ENCODE measurements at regions of chr9 and their contacts with region 1.

Region 1: GRCh38 chr9:78121488-78121887 is 89.9 kb upstream of the GNAQ start:
- DNase-seq: peak; percentile 20 to 81 (median 50)
- ATAC-seq: no peak
- H3K4me3 ChIP-seq: no peak overlapping the region
- H3K4me3 Mint-ChIP-seq: no peak overlapping the region
- H3K27ac ChIP-seq: no peak overlapping the region
- H3K27ac Mint-ChIP-seq: peak overlapping the region; percentile 85
- H3K4me1 ChIP-seq: peaks cover 19% of the 10 kb centered on the region
- H3K4me1 Mint-ChIP-seq: peaks cover 62% of the 10 kb centered on the region
- H3K27me3 ChIP-seq: no peaks in the 10 kb centered on the region
- H3K27me3 Mint-ChIP-seq: no peaks in the 10 kb centered on the region
- CTCF ChIP-seq: peak; percentile 80

Region 2: DNA sequence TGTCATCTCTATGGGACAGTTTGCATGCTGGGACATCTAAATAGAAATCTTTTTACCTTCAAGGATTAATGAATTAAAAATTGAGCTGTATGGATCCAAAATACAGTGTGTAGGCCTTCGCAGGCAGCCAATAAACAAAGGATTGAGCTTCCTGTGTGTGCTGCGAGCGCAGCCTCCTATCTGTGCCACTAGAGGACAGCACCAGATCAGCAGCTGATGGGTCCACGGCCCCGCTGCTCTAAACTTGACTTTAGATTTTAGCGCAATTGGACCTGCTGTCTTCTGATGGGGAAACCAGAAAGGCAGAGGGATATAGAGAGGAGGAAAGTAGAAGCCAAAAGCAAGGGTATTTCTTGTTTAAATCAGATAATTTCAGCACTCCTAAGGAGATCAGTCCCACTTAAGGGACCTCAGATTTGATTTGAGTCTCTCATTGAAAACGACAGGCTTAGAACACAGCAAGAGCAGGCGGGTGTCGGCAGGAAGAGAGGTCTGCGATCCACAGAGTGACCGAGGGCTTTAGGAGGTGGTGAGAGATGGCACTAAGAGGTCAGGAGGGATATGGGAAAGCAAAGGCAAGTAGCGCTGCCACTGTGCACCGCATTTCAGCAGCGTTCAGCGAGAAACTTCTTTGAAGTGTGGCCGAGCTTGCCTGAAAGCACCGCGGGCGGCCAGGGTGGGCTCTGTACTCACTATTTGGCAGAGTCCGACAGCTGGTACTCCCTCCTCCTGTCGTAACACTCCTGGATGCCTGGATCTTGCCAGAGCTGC is 687.6 kb before region 1 on chr9:
- CTCF ChIA-PET with region 1: no interaction called
- POLR2A ChIA-PET with region 1: no interaction called
- intact Hi-C with region 1: loop called (anchors 5 kb)
- DNase-seq: peak; percentile 14 to 71 (median 38)
- ATAC-seq: peak; percentile 91
- H3K4me3 ChIP-seq: no peak overlapping the region
- H3K4me3 Mint-ChIP-seq: no peak overlapping the region
- H3K27ac ChIP-seq: no peak overlapping the region
- H3K27ac Mint-ChIP-seq: no peak overlapping the region
- H3K4me1 ChIP-seq: peaks cover 5% of the 10 kb centered on the region
- H3K4me1 Mint-ChIP-seq: peaks cover 5% of the 10 kb centered on the region
- H3K27me3 ChIP-seq: no peaks in the 10 kb centered on the region
- H3K27me3 Mint-ChIP-seq: peaks cover 5% of the 10 kb centered on the region
- CTCF ChIP-seq: peak; percentile 92

Region 3: GRCh38 chr9:77841739-77842386 is 279.6 kb before region 1 on chr9:
- CTCF ChIA-PET with region 1: no interaction called
- POLR2A ChIA-PET with region 1: no interaction called
- intact Hi-C with region 1: loop called (anchors 2 to 10 kb)
- DNase-seq: peak in 2 of 14 experiments; percentile 8 to 33
- ATAC-seq: no peak
- H3K4me3 ChIP-seq: no peak overlapping the region
- H3K4me3 Mint-ChIP-seq: no peak overlapping the region
- H3K27ac ChIP-seq: no peak overlapping the region
- H3K27ac Mint-ChIP-seq: peak overlapping the region; percentile 11
- H3K4me1 ChIP-seq: no peaks in the 10 kb centered on the region
- H3K4me1 Mint-ChIP-seq: peaks cover 21% of the 10 kb centered on the region
- H3K27me3 ChIP-seq: no peaks in the 10 kb centered on the region
- H3K27me3 Mint-ChIP-seq: no peaks in the 10 kb centered on the region
- CTCF ChIP-seq: peak; percentile 36

Region 4: DNA sequence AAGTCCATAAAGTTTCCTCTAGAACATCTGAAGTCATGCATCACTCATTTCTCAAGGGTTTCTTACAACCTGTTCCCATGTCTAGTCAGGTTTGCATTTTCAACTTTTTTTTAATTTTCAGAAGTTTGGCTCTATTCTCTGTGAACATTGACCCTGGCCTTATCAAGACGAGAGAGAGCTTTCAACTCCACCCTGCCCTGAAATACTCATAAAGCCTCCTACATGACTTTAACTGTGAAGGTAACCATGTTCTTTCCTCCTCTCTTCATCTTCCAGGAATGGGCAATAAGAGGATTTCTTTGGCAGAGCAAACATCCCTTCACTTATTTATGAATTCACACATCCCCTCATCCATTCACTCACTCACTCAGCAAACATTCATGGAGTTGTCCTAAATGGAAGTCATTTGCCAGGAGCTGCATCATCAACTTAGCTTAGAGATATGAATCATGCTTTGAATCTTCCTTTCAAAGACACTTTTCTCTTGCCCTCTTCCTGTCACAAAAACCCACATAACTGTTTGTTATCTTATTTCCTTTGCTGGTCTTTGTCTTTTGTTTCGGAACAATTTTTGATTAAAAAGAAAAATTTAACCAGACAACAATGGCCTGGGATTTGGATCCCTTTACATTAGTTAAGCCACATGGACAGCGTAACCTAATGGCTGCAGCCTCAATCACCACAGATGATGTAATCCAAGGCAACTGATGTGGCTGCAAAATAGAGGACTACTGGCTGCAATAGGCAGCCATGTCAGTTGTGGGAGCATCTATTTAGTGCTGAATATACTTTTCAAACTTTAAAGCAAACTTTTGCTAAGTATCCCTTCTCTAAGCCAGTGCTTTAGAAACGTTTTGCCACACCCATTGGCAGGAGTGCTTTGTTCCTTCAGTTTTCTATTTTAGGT is 46.9 kb before region 1 on chr9:
- CTCF ChIA-PET with region 1: no interaction called
- POLR2A ChIA-PET with region 1: interaction called, 10 read pairs
- intact Hi-C with region 1: no loop called
- DNase-seq: peak in 4 of 14 experiments; percentile 22 to 68 (median 60)
- ATAC-seq: peak; percentile 78
- H3K4me3 ChIP-seq: peak overlapping the region; percentile 18
- H3K4me3 Mint-ChIP-seq: peak overlapping the region; percentile 74
- H3K27ac ChIP-seq: peak overlapping the region; percentile 47 to 75
- H3K27ac Mint-ChIP-seq: peak overlapping the region; percentile 73
- H3K4me1 ChIP-seq: peaks cover 32% of the 10 kb centered on the region
- H3K4me1 Mint-ChIP-seq: peaks cover 53% of the 10 kb centered on the region
- H3K27me3 ChIP-seq: no peaks in the 10 kb centered on the region
- H3K27me3 Mint-ChIP-seq: no peaks in the 10 kb centered on the region
- CTCF ChIP-seq: no peak

Region 5: GRCh38 chr9:78213712-78214111 is 92.2 kb after region 1 on chr9:
- CTCF ChIA-PET with region 1: no interaction called
- POLR2A ChIA-PET with region 1: interaction called, 8 read pairs
- intact Hi-C with region 1: loop called in 1 of 2 experiments (anchors 5 kb)
- DNase-seq: peak in 3 of 14 experiments; percentile 61 to 62 (median 62)
- ATAC-seq: peak; percentile 73
- H3K4me3 ChIP-seq: no peak overlapping the region
- H3K4me3 Mint-ChIP-seq: no peak overlapping the region
- H3K27ac ChIP-seq: no peak overlapping the region
- H3K27ac Mint-ChIP-seq: no peak overlapping the region
- H3K4me1 ChIP-seq: peaks cover 26% of the 10 kb centered on the region
- H3K4me1 Mint-ChIP-seq: peaks cover 47% of the 10 kb centered on the region
- H3K27me3 ChIP-seq: no peaks in the 10 kb centered on the region
- H3K27me3 Mint-ChIP-seq: no peaks in the 10 kb centered on the region
- CTCF ChIP-seq: peak; percentile 66

Measured in CD4-positive, alpha-beta T cell (primary cell).